ENCODE measurements at regions of chr11 and their contacts with region 1.

Region 1: GRCh38 chr11:12110201-12110713 is at the start of gene MICAL2:
- DNase-seq: no peak
- H3K4me3 ChIP-seq: peak within 1 kb of the TSS; percentile 87
- CTCF ChIP-seq: no peak

Region 2: DNA sequence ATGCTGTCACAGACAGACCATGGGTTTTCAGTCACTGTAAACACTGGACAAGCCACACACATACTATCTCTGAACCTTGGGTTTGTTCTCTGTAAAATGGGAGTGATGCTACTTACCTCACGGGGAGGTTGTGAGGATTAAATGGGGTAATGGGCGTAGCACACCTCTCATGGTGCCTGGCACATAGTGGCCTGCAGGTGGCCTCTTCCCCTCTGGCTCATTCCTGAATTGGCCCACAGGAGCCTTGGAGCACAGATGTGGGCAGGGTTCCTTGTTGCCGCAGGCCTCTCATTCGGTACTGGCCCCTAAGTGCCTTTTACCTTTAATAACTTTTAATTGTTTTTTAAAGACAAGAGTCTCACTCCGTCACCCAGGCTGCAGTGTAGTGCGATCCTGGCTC is 11.8 kb after region 1 on chr11:
- CTCF ChIA-PET with region 1: interaction called, 10 read pairs
- POLR2A ChIA-PET with region 1: interaction called, 5 read pairs
- DNase-seq: no peak
- H3K4me3 ChIP-seq: no peak overlapping the region
- CTCF ChIP-seq: peak; percentile 44